ENCODE measurements at regions of chr14 and their contacts with region 1.

Region 1: GRCh38 chr14:74618078-74618952 is 6.3 kb upstream of the LTBP2 start:
- DNase-seq: peak; percentile 88
- ATAC-seq: peak; percentile 20
- H3K4me3 ChIP-seq: peak overlapping the region in 1 of 2 experiments; percentile 45; a peak in 2 of 4 replicates
- H3K27ac ChIP-seq: peak overlapping the region; percentile 70
- H3K4me1 ChIP-seq: peaks cover 55 to 86% of the 10 kb centered on the region in 2 experiments
- H3K27me3 ChIP-seq: no peaks in the 10 kb centered on the region
- CTCF ChIP-seq: no peak
- POLR2A ChIP-seq: no peak
- RAD21 ChIP-seq: no peak

Region 2: GRCh38 chr14:74542056-74542685 is 76.1 kb before region 1 on chr14:
- CTCF ChIA-PET with region 1: no interaction called
- POLR2A ChIA-PET with region 1: no interaction called
- RAD21 ChIA-PET with region 1: no interaction called
- intact Hi-C with region 1: no loop called
- DNase-seq: no peak
- ATAC-seq: no peak
- H3K4me3 ChIP-seq: no peak overlapping the region
- H3K27ac ChIP-seq: no peak overlapping the region
- H3K4me1 ChIP-seq: no peaks in the 10 kb centered on the region
- H3K27me3 ChIP-seq: no peaks in the 10 kb centered on the region
- CTCF ChIP-seq: no peak
- POLR2A ChIP-seq: no peak
- RAD21 ChIP-seq: no peak

Region 3: DNA sequence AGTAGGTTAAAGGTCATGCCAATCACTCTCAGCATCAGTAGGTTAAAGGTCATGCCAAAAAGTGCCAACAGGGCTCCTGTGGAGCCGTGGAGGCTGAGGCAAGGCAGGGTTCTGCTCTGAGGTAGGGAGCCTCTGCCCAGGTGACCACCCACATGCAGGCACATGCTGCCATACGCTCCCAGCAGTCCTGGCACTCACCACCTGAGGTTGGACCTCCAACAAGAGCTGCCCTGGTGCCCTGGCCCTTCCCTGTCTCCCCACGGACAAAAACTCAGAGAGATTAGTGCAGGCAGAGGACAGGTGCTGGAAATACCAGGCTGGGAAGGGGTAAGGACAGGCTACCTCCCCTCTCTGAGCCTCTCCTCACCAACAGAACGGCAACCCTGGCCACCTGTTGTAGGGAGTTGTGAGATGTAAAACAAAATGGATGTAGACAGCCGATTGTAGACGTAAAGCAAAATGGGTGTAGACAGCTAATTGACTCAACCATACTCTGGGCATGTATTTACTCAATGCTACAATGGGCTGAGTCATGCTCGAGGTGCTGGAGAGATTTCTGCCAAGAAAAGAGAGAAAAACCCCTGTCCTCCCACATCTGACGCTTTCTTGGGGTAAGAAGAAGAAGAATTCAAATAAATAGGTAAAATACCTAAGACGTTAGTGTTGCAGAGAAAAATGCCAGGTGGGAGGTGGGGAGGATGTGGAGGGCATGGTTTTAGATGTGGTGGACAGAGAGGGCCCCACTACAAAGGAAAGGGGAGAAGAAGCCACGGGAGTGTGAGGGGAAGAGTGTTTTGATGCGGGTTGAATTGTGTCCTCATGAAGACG is 38.7 kb before region 1 on chr14:
- CTCF ChIA-PET with region 1: no interaction called
- POLR2A ChIA-PET with region 1: no interaction called
- RAD21 ChIA-PET with region 1: no interaction called
- intact Hi-C with region 1: no loop called
- DNase-seq: peak; percentile 62
- ATAC-seq: peak; percentile 69
- H3K4me3 ChIP-seq: peak overlapping the region in 1 of 2 experiments; percentile 22; a peak in 1 of 4 replicates
- H3K27ac ChIP-seq: peak overlapping the region; percentile 68
- H3K4me1 ChIP-seq: peaks cover 42 to 70% of the 10 kb centered on the region in 2 experiments
- H3K27me3 ChIP-seq: no peaks in the 10 kb centered on the region
- CTCF ChIP-seq: no peak
- POLR2A ChIP-seq: no peak
- RAD21 ChIP-seq: no peak

Region 4: DNA sequence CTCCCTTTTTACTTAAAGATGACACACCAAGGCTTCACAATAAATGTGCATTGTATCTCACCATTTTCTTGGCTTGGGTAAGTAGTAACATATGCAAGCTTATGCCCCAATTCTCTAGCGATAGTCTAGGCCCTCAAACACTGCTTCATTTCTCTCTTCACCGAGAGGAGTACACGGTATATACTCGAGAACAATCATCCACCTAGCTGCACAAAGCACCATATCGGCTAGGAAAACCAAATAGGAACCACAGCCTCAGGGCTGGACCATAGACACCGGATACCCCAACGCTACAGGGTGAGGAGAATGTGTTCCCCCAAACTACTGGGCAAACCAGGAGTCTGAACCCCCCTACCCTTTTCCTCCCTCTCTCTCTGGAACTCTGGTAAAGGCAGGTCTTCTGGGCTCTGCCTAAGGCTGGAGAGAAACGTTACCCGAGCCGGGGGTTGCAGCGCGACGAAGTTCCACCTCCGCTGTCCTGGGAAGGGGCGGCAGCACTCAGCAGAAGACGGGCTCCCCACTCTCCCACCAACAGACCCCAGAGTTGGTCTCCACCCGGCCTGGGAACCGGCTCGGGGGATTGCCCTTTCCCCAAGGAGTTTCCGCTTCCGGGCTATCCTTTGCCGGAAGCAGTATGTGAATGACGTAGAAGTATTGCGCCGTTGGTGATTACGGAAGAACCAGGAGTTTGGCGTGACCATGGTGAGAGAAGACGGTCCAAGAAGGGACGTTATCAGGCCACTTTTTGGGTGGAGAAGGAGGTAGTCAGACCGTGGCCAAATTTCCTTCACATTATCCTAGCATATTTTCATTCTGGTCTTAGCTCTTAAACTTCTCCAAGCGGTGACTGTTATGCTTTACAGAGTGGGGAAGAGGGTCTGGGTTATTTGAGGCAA is 94.4 kb after region 1 on chr14 and contains the starts of genes AREL1 and FCF1:
- CTCF ChIA-PET with region 1: no interaction called
- POLR2A ChIA-PET with region 1: no interaction called
- RAD21 ChIA-PET with region 1: no interaction called
- intact Hi-C with region 1: loop called (anchors 5 kb)
- DNase-seq: peak; percentile 85
- ATAC-seq: peak; percentile 96
- H3K4me3 ChIP-seq: peak within 1 kb of the TSS; percentile 74 to 94
- H3K27ac ChIP-seq: peak within 1 kb of the TSS; percentile 36
- H3K4me1 ChIP-seq: peaks cover 5 to 14% of the 10 kb centered on the region in 2 experiments; a peak in 3 of 4 replicates
- H3K27me3 ChIP-seq: no peaks in the 10 kb centered on the region
- CTCF ChIP-seq: no peak
- POLR2A ChIP-seq: no peak
- RAD21 ChIP-seq: 0 out of 2 replicates have a peak, but pooled peaks have one; percentile 9
- total RNA-seq, gene AREL1: 45.9 TPM
- total RNA-seq, gene FCF1: 69.0 TPM

Region 5: DNA sequence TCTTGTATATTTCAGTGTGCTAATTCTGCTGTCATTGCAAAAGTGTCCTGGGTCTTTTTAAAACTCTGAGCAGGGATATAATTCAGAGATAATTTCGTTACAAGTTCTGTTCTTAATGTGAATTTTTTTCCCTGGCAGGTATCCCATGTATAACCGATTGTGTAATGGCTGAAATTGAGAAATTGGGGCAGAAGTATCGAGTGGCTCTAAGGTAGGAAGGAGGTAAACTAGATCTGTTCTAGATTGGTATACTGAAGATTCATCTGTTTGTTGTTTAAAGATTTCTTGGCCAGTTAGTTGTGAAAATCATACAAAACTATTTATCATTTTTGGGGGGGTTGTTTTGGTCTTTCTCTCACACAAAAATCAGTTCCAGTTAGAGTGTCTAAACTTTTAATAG is 104.8 kb after region 1 on chr14:
- CTCF ChIA-PET with region 1: no interaction called
- POLR2A ChIA-PET with region 1: no interaction called
- RAD21 ChIA-PET with region 1: no interaction called
- intact Hi-C with region 1: no loop called
- DNase-seq: no peak
- ATAC-seq: no peak
- H3K4me3 ChIP-seq: no peak overlapping the region
- H3K27ac ChIP-seq: no peak overlapping the region
- H3K4me1 ChIP-seq: no peaks in the 10 kb centered on the region
- H3K27me3 ChIP-seq: no peaks in the 10 kb centered on the region
- CTCF ChIP-seq: no peak
- POLR2A ChIP-seq: no peak
- RAD21 ChIP-seq: no peak

Region 6: DNA sequence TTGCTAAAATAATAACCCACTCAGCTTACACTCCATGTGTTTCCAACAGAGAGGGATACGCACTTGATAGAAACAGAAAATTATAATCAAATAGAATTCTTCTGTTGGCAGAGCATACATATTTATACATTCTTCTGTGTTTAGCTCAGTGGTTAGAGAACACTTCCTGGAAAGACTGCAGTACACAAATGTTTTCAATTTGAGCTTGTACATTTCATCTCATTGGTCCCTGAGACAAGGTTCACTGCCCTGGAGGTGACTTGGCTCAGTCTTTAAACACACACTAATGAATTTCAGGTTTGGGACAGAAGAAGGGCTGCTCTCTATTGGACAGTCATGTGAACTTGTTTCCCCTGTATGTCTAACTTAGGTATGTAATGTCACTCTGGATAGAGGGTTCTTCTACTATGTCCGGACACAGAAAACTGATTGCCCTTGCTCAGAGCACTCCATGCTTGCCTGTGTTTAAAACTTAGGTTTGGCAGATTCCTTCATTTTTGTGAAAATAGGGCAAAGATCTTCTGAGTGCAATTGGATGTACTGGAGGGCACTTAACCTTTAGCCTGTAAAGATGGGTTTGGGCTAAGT is 234.7 kb after region 1 on chr14:
- CTCF ChIA-PET with region 1: no interaction called
- POLR2A ChIA-PET with region 1: no interaction called
- RAD21 ChIA-PET with region 1: no interaction called
- intact Hi-C with region 1: no loop called
- DNase-seq: no peak
- ATAC-seq: no peak
- H3K4me3 ChIP-seq: no peak overlapping the region
- H3K27ac ChIP-seq: no peak overlapping the region
- H3K4me1 ChIP-seq: no peaks in the 10 kb centered on the region
- H3K27me3 ChIP-seq: no peaks in the 10 kb centered on the region
- CTCF ChIP-seq: no peak
- POLR2A ChIP-seq: no peak
- RAD21 ChIP-seq: no peak